Calu3 (cell line): ENCODE measurements at regions of chr10 and their contacts with region 1.

Region 1: GRCh38 chr10:101889256-101890210 is 45.9 kb upstream of the KCNIP2 start:
- DNase-seq: peak; percentile 78
- H3K4me3 Mint-ChIP-seq: no peak overlapping the region
- H3K27ac Mint-ChIP-seq: no peak overlapping the region
- H3K4me1 Mint-ChIP-seq: peaks cover 9% of the 10 kb centered on the region
- H3K27me3 Mint-ChIP-seq: no peaks in the 10 kb centered on the region
- CTCF ChIP-seq: peak; percentile 72

Region 2: GRCh38 chr10:101830322-101831168 is 59.0 kb before region 1 on chr10:
- CTCF ChIA-PET with region 1: no interaction called
- intact Hi-C with region 1: no loop called
- DNase-seq: peak; percentile 77
- H3K4me3 Mint-ChIP-seq: peak overlapping the region; percentile 80
- H3K27ac Mint-ChIP-seq: peak overlapping the region; percentile 69
- H3K4me1 Mint-ChIP-seq: peaks cover 19% of the 10 kb centered on the region
- H3K27me3 Mint-ChIP-seq: no peaks in the 10 kb centered on the region
- CTCF ChIP-seq: no peak

Region 3: DNA sequence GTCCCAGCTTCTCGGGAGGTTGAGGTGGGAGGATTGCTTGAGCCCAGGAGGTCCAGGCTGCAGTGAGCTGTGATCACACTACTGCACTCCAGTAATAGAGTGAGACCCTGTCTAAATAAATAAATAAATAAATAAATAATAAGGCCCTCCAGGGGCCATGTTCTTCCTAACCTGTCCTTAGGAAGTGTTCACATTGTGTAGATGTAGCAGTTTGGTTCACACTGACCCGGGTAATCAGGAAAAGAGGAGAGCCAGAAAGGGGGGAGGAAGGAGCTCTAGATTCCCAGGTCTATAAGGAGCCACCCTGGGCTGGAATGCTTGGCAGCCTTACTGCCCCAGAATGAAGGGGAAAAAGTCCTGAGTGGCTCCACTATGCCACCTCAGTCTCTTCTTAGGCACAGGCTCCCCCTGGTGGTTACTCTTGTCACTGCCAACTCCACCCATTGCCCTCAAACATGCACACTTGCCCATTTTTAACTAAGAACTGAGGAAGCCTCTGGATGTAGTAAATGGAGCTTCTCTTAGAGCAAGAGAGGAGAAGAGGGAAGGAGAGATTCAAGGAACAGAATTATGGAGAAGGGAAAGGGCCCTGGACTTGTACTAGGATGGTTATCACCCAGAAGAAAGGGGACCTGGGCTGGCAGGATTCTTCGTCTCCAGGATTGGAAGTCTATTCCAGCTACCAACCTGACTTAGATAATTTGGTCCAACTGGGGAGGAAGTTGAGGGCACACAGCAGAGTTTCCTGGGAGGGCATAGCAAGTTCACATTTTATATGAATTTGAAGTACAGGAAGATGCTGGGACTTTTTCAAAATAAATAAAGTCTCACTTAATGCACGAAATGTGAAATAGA is 183.4 kb after region 1 on chr10:
- CTCF ChIA-PET with region 1: no interaction called
- intact Hi-C with region 1: loop called (anchors 5 kb)
- DNase-seq: peak; percentile 80
- H3K4me3 Mint-ChIP-seq: no peak overlapping the region
- H3K27ac Mint-ChIP-seq: no peak overlapping the region
- H3K4me1 Mint-ChIP-seq: peaks cover 12% of the 10 kb centered on the region
- H3K27me3 Mint-ChIP-seq: peaks cover 24% of the 10 kb centered on the region
- CTCF ChIP-seq: peak; percentile 79

Region 4: GRCh38 chr10:102114861-102115618 is 225.5 kb after region 1 on chr10:
- CTCF ChIA-PET with region 1: no interaction called
- intact Hi-C with region 1: no loop called
- DNase-seq: peak; percentile 81
- H3K4me3 Mint-ChIP-seq: peak overlapping the region; percentile 85
- H3K27ac Mint-ChIP-seq: peak overlapping the region; percentile 50
- H3K4me1 Mint-ChIP-seq: peaks cover 43% of the 10 kb centered on the region
- H3K27me3 Mint-ChIP-seq: no peaks in the 10 kb centered on the region
- CTCF ChIP-seq: no peak